Astrocyte of the cerebellum (primary cell): ENCODE measurements at regions of chr5 and their contacts with region 1.

Region 1: GRCh38 chr5:133006653-133007052 is 19.7 kb downstream of the ZCCHC10 start:
- DNase-seq: no peak
- H3K4me3 ChIP-seq: no peak overlapping the region
- CTCF ChIP-seq: no peak

Region 2: DNA sequence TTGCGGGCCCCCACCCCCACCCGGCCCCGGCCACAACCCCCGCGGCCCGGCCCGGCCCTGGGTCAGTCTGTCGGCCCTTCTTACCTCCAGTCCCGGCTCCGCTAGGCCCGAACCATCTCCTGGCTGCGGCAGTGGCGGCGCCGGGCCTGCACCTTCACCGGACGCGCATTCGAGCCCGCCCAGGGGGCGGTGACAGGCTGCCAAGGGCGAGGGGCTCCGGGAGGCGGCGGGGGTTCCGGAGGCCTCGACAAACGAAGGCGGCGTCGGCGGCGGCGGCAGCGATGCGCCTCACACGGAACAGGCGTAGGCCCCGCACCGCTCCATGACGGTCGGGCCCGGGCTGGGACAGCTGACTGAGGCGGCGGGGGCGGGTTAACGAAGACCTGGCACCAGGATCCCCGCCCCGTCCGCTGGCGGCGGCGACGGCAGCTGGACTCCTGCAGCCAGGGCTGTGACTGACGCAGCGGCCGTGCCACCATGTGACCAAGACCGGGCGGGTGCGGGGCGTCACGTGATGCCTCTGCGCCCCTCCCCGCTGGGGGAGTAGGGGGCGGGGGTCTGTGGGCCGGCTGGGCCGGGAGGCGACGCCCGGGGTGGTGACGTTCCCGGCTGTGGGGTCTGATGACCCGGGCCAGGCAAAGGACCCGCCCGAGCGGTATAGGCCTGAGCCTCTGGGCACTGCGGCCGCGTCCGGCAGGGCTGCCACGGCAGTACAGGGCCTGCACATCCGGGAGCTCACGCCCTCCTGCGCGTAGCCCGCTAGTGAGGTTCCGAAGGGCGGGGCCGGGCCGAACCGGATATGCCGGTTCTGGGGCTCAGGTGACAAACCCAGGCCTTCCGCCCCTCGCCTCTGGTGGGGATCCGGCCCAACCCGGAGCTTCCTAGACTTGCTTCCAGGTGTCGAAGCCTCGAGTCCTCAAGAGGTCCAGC is 43.2 kb before region 1 on chr5 and contains the start of gene AFF4:
- in situ Hi-C with region 1: loop called (anchors 5 kb)
- DNase-seq: peak; percentile 84
- H3K4me3 ChIP-seq: peak within 1 kb of the TSS; percentile 93
- CTCF ChIP-seq: no peak